ENCODE measurements at regions of chr3 and their contacts with region 1.

Region 1: DNA sequence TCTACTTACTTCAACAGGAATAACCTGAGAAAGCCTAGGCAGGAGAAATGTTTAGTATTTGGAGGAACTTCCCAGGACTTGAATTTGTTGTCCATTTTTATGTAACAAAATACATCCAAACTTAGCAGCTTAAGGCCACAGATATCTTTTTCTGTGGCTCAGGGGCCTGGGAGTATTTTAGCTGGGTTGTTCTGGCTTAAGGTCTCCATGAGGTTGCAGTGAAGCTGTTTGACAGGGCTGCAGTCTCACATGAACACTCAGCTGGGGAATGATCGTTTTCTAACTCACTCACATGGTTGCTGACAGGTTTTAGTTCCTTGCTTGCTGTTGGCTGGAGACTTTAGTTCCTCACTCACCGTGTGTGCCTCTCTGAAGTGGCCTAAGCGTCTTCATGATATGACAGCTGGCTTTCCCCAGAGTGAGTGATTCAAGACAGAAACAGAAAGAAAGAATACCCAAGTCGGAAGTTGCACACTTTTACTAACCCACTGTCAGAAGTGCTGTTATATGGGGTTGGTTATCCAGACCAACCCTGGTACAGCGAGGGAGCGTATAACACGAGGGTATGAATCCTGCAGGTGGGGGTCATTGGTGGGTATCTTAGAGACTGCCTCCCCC is 229.7 kb upstream of the TBL1XR1 start:
- DNase-seq: peak; percentile 58
- H3K4me3 Mint-ChIP-seq: peak overlapping the region; percentile 54
- H3K27ac Mint-ChIP-seq: peak overlapping the region; percentile 85
- H3K4me1 Mint-ChIP-seq: peaks cover 35% of the 10 kb centered on the region
- H3K27me3 Mint-ChIP-seq: peaks cover 2% of the 10 kb centered on the region

Region 2: DNA sequence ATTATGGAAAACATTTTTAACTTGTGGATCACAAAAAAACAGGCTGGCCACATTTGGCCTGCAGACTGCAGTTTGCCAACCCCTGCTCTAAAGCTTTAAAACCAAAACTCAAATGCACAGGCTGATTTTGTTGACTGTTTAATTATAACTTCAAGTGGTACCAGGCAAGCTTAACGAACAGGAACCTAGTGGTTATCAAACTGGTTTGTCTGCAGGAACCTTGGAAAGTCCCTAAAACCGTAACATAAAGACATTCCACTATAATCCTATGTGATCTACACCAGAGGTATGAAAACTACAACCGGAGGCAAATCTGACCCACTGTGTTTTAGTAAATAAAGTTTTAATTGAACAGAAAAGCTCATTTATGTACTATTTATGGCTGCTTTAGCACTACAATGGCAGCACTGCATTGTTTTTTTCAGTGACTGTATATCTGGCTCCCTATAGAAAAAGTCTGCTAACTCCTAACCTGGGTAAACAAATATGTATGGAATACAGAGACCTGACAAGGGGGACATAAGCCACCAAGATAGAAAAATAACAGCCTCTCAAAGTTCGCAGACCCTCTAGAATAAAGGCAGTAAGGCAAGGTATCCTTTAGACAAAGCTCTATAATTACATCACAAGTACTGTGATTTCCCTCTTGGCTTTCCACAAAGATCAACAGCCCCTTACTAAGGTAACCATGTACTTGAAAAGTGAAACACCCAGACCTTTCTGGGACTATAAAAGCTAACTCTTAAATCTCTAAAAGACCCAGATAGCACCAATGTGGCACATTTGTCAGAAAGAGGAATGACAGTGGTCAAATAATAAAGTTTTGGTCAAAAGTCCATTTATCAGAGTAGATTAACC is 281.8 kb before region 1 on chr3:
- intact Hi-C with region 1: loop called (anchors 2 kb)
- DNase-seq: no peak
- H3K4me3 Mint-ChIP-seq: peak overlapping the region; percentile 61
- H3K27ac Mint-ChIP-seq: peak overlapping the region; percentile 86
- H3K4me1 Mint-ChIP-seq: peaks cover 62% of the 10 kb centered on the region
- H3K27me3 Mint-ChIP-seq: no peaks in the 10 kb centered on the region

Region 3: GRCh38 chr3:177337541-177338331 is 89.3 kb before region 1 on chr3:
- intact Hi-C with region 1: loop called (anchors 1 kb)
- DNase-seq: peak; percentile 43
- H3K4me3 Mint-ChIP-seq: no peak overlapping the region
- H3K27ac Mint-ChIP-seq: peak overlapping the region; percentile 87
- H3K4me1 Mint-ChIP-seq: peaks cover 45% of the 10 kb centered on the region
- H3K27me3 Mint-ChIP-seq: no peaks in the 10 kb centered on the region

Region 4: DNA sequence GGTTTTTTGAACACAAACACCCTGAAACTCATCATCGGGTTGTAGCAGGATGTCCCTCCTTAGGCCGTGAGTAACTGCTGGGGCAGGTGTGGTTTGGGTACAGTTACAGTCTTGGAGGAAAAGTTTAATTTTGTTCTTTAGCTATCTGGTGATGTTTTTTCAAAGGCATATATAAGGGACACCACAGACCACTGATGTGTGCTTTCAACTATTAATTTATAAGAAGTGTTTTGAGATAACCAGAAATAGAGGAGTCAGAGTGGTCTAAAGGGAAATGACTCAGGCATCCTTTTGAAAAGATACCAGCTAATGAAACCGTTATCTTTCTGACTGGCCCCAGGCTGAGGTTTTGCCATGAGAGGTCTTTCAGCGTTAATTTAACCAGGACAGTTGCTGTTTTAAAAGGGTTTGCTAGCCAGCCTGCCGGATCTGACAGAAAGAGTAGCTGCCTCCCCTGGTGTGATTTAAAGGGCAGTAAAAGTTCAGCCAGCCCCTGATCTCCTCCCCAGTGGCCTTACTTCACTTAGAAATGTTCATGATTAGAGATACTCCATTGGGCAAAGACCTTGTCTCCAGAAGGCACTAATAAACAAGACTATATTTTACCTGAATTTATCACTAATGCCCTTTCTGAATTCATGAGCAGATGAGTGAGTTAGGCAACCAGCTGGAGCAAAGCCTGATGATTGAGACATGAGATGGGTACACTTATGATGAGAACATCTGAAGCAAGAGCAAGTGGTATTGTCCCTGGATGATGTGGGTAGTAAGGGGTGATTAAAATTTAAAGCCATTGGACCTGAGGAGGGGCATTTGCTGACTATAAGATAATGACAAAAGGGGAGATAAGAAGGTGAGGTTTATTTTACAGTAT is 252.8 kb after region 1 on chr3:
- intact Hi-C with region 1: loop called (anchors 2 kb)
- DNase-seq: peak; percentile 9
- H3K4me3 Mint-ChIP-seq: no peak overlapping the region
- H3K27ac Mint-ChIP-seq: peak overlapping the region; percentile 24
- H3K4me1 Mint-ChIP-seq: peaks cover 22% of the 10 kb centered on the region
- H3K27me3 Mint-ChIP-seq: no peaks in the 10 kb centered on the region